Activated naive CD8-positive, alpha-beta T cell treated with anti-CD3 and anti-CD28 coated beads, Interleukin-2, amount 10 ng/mL, durations not matched to agents 7 days and 5 days (primary cell): ENCODE measurements at regions of chr12 and their contacts with region 1.

Region 1: DNA sequence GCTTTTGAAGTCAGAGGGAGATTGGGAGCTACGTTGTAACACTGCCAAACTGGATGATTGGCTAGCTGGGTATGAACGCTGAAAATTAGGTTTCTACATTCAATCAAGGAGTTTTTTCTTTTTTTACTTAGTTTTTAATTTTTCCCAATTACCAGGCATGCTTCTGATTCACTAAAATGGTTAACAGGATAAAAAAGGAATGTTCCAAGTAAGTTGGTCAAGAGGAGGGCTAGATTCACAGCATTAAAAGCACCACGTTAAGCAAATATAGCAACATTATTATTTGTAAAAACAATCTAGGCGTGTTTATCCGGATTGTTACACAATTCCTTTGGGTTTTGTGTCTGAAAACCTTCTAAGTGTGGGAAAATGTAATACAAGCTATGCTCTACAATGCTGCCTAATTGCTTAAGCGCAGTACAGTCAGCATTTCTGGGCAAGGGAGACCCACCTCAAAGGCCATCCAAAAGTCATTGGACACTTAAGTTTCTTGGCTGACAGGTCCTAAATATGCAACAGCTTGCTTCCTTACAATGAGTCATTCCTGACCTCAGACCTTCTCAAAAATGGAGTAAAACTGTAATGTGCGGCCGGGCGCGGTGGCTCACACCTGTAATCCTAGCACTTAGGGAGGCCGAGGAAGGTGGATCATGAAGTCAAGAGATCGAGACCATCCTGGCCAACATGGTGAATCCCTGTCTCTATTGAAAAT is 1.2 kb downstream of the RPLP0 start:
- DNase-seq: no peak
- ATAC-seq: no peak
- H3K4me3 Mint-ChIP-seq: peak overlapping the region; percentile 98
- H3K27ac Mint-ChIP-seq: peak overlapping the region; percentile 97
- H3K4me1 Mint-ChIP-seq: peaks cover 28% of the 10 kb centered on the region
- H3K27me3 Mint-ChIP-seq: no peaks in the 10 kb centered on the region

Region 2: GRCh38 chr12:119931402-119931801 is 268.3 kb before region 1 on chr12:
- POLR2A ChIA-PET with region 1: no interaction called
- DNase-seq: no peak
- ATAC-seq: no peak
- H3K4me3 Mint-ChIP-seq: no peak overlapping the region
- H3K27ac Mint-ChIP-seq: no peak overlapping the region
- H3K4me1 Mint-ChIP-seq: no peaks in the 10 kb centered on the region
- H3K27me3 Mint-ChIP-seq: peaks cover 4% of the 10 kb centered on the region

Region 3: DNA sequence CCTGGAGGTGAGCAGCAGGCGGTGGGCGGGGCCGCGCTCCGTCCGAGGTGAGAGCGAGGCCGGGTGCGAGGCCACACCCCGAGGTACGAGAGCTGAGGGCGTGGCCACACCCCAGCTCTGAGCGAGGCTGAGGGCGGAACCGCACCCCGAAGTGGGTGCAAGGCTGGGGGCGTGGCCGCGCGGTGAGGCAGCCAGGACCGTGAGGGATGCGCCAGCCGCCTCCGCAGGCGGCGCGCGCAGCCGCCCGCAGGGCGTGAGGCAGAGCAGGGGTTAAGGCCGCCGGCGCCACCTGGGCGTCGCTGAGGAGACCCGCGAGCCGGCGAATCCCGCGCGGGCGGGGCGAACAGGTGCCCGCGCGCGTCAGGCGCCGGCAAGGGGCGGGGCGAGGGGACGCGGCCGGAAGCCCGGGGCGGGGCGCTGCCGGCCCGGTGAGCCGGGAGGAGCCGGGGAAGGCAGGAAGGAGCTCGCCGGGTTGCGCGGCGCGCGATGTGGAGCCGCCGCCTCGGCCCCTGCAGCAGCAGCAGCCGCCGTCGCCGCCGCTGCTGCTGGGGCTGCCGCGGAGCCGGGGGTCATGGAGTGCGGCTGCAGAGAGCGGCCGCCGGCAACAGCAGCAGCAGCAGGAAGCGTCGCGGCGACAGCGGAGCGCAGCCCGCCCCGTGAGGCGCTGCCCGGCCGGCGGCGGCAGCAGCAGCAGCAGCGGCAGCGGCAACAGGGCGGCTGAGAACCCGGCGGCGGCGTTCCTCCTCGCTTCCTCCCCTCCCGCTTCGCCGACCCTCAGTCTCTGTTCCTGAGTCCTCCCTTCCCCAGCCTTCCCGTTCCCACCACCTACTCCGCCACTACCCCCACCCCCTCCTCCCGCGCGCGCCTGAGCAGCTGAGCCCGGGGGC is 210.7 kb before region 1 on chr12 and contains the start of gene BICDL1:
- POLR2A ChIA-PET with region 1: interaction called, 26 read pairs
- DNase-seq: peak; percentile 99
- ATAC-seq: peak; percentile 86
- H3K4me3 Mint-ChIP-seq: peak within 1 kb of the TSS; percentile 91
- H3K27ac Mint-ChIP-seq: peak within 1 kb of the TSS; percentile 85
- H3K4me1 Mint-ChIP-seq: peaks cover 28% of the 10 kb centered on the region
- H3K27me3 Mint-ChIP-seq: peaks cover 7% of the 10 kb centered on the region
- total RNA-seq, gene BICDL1: 98.5 to 100 TPM

Region 4: DNA sequence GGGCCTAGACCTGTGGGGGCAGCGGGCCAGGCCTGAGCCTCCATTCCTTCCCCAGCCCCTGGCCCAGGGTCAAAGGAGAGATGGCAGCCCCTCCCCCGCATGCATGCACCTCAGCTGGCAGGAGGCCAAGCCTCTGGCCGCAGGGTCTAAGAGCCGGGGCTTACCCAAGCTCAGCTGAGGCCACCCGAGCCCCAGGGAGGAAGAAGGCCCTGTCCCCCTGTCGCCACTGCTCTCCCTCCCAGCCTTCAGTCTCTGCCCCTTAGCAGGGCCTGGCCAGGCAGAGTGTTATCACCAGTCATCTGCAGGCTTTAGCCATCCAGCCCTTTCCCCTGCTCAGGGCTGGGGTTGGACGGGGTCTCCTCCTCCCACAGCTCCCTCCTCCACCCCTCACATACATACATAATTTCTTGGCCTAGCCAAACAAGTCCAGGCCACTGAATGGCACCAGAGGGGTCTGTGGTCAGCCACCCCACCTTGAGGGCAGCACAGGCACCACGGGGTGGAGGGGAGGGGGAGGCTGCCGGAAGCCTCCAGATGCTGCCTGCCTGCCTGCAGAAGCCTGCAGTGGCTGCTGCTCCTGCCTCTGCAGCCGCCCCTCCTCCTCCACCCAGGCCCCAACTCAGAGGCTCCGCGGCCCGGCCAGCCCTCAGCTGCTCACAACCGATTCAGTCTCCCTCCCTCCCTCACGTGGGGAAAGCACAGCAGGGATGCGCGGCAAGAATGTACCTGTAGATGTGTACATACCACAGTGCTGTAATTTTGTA is 106.0 kb before region 1 on chr12:
- POLR2A ChIA-PET with region 1: no interaction called
- DNase-seq: no peak
- ATAC-seq: peak; percentile 13
- H3K4me3 Mint-ChIP-seq: no peak overlapping the region
- H3K27ac Mint-ChIP-seq: no peak overlapping the region
- H3K4me1 Mint-ChIP-seq: peaks cover 5% of the 10 kb centered on the region
- H3K27me3 Mint-ChIP-seq: no peaks in the 10 kb centered on the region

Region 5: GRCh38 chr12:120116792-120117651 is 82.7 kb before region 1 on chr12:
- POLR2A ChIA-PET with region 1: interaction called, 41 read pairs
- DNase-seq: peak; percentile 100
- ATAC-seq: peak; percentile 86
- H3K4me3 Mint-ChIP-seq: peak overlapping the region; percentile 96
- H3K27ac Mint-ChIP-seq: peak overlapping the region; percentile 89
- H3K4me1 Mint-ChIP-seq: peaks cover 61% of the 10 kb centered on the region
- H3K27me3 Mint-ChIP-seq: no peaks in the 10 kb centered on the region

Region 6: DNA sequence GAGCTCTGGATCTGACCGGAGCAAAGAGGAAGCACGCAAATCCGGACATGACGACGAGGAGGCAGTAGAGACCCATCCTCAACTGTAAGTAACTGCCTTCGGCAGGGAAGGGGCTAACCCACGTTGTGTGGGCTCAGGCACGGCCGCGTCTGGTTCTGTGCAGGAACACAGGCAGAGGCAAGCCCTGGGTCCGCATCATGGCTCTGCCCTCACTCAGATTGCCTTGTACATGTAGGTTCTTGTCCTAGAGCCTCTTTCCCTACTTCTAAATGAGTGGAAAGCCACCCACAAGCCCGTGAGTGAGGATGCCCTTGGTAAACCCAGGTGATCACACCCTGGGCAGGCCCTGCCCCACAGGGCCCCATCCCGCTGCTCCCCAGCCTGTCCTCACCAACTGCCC is 10.1 kb after region 1 on chr12:
- POLR2A ChIA-PET with region 1: interaction called, 13 read pairs
- DNase-seq: no peak
- ATAC-seq: no peak
- H3K4me3 Mint-ChIP-seq: no peak overlapping the region
- H3K27ac Mint-ChIP-seq: no peak overlapping the region
- H3K4me1 Mint-ChIP-seq: peaks cover 2% of the 10 kb centered on the region
- H3K27me3 Mint-ChIP-seq: no peaks in the 10 kb centered on the region

Region 7: GRCh38 chr12:120228291-120229070 is 28.7 kb after region 1 on chr12:
- POLR2A ChIA-PET with region 1: interaction called, 62 read pairs
- DNase-seq: peak; percentile 89
- ATAC-seq: peak; percentile 69
- H3K4me3 Mint-ChIP-seq: peak overlapping the region; percentile 58
- H3K27ac Mint-ChIP-seq: peak overlapping the region; percentile 51
- H3K4me1 Mint-ChIP-seq: peaks cover 65% of the 10 kb centered on the region
- H3K27me3 Mint-ChIP-seq: no peaks in the 10 kb centered on the region

Region 8: GRCh38 chr12:120265473-120266179 is 65.9 kb after region 1 on chr12 and contains the start of gene PXN:
- POLR2A ChIA-PET with region 1: interaction called, 83 read pairs
- DNase-seq: peak; percentile 98
- ATAC-seq: peak; percentile 83
- H3K4me3 Mint-ChIP-seq: peak within 1 kb of the TSS; percentile 91
- H3K27ac Mint-ChIP-seq: peak within 1 kb of the TSS; percentile 79
- H3K4me1 Mint-ChIP-seq: peaks cover 35% of the 10 kb centered on the region
- H3K27me3 Mint-ChIP-seq: no peaks in the 10 kb centered on the region
- total RNA-seq, gene PXN: 89.0 to 94.7 TPM

Region 9: GRCh38 chr12:120367233-120367923 is 167.6 kb after region 1 on chr12:
- POLR2A ChIA-PET with region 1: no interaction called
- DNase-seq: no peak
- ATAC-seq: no peak
- H3K4me3 Mint-ChIP-seq: peak overlapping the region; percentile 21
- H3K27ac Mint-ChIP-seq: no peak overlapping the region
- H3K4me1 Mint-ChIP-seq: no peaks in the 10 kb centered on the region
- H3K27me3 Mint-ChIP-seq: peaks cover 75% of the 10 kb centered on the region